Body of pancreas (tissue), 4 donors: ENCODE measurements at regions of chr20 and their contacts with region 1.

Region 1: DNA sequence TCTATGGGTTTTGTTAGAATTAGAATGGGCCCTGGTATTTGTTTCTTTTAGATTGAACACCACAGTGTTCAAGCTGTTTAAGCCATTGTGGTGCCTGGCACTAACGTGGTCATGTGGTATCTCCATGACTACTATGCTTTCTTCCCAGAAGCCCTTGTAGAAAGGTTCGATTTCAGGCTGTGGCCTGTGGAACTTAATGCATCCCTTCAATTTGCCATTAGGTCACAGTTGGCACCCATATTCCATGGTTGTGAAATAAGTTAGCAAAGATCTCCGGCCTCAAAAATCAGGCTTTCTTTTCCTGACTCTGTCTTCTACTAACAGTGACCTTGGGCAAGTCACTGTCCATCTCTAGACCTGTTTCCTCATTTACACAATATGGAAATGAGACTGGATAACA is 31.3 kb upstream of the AAR2 start:
- DNase-seq: no peak
- ATAC-seq: no peak
- H3K4me3 ChIP-seq: no peak overlapping the region
- H3K27ac ChIP-seq: no peak overlapping the region
- H3K4me1 ChIP-seq: no peaks in the 10 kb centered on the region
- H3K27me3 ChIP-seq: no peaks in the 10 kb centered on the region
- CTCF ChIP-seq: no peak
- POLR2A ChIP-seq: no peak

Region 2: DNA sequence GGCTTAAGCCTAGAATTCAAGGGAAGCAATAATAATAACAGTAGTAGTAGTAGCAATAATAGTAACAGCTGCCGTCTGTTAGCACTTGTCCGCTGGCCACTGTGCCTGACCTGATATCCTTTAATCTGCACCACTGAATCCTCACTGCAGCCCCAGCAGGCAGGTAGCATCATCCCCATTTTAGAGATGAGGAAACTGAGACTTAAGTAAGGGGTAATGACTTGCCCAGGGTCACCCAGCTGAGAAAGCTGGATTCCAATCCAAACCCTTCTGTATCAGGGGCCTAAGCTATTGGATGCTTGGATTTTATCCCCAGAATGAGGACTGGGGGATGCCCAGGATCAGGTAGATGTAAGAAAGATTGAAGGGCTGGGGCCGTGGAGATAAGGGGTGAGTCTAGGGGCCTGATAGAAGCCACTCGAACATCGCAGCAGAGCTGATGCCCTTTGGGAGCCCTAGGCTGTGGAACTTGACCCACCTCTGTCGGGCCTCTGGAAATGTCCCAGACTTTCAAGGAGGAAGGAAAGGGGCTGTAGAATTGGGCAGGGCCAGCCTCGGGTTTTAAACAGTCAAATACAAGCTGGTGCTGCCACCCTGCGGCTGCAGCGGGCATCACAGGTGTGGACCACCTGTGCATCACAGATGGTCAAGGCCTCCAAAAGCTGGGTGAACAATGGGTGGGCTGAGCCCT is 234.2 kb after region 1 on chr20:
- intact Hi-C with region 1: loop called (anchors 5 kb)
- DNase-seq: peak; percentile 72 to 86 (median 73)
- ATAC-seq: peak; percentile 64
- H3K4me3 ChIP-seq: no peak overlapping the region
- H3K27ac ChIP-seq: no peak overlapping the region
- H3K4me1 ChIP-seq: peaks cover 8% of the 10 kb centered on the region
- H3K27me3 ChIP-seq: no peaks in the 10 kb centered on the region
- CTCF ChIP-seq: peak; percentile 77 to 89 (median 83)
- POLR2A ChIP-seq: no peak

Region 3: GRCh38 chr20:36728986-36729385 is 524.0 kb after region 1 on chr20:
- intact Hi-C with region 1: no loop called
- DNase-seq: no peak
- ATAC-seq: no peak
- H3K4me3 ChIP-seq: no peak overlapping the region
- H3K27ac ChIP-seq: no peak overlapping the region
- H3K4me1 ChIP-seq: no peaks in the 10 kb centered on the region
- H3K27me3 ChIP-seq: no peaks in the 10 kb centered on the region
- CTCF ChIP-seq: no peak
- POLR2A ChIP-seq: no peak